T-cell (primary cell): ENCODE measurements at regions of chr11 and their contacts with region 1.

Region 1: DNA sequence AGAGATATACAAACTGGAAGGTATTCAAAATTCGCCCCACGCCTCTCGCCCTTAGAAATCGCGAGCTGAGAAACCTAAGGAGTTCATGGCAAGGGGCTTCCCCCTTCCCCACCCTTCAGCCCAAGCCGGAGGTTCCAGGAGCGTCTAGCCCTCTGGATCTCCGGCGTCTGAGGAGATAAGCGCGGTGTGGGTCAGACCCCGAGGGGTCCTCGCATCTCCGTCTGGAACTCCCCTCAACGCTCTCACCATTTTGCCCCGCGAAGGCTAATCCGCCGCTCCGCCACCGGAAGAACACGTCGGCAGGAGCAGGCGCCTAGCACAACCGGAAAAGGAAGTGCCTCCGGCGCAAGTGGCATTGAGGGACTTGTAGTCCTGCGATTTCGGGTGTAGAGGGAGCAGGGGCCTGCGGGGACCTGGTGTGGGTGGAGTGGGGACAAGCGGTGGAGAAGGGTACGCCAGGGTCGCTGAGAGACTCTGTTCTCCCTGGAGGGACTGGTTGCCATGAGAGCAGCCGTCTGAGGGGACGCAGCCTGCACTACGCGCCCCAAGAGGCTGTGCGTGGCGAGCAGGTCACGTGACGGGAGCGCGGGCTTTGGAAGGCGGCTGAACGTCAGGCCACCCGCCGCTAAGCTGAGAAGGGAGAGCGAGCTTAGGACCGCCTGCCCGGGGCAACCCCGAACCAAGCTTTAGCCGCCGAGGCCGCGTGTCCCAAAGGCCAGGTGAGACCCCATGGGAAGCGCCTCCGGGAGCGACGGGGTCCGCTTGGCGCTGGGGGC is at the starts of genes FEN1 and TMEM258:
- DNase-seq: peak; percentile 79 to 91 (median 83)
- ATAC-seq: peak; percentile 90 to 94 (median 93)
- H3K4me3 ChIP-seq: peak within 1 kb of the TSS; percentile 73 to 76
- H3K4me3 Mint-ChIP-seq: peak within 1 kb of the TSS; percentile 83 to 98 (median 89)
- H3K27ac ChIP-seq: peak within 1 kb of the TSS; percentile 94
- H3K27ac Mint-ChIP-seq: peak within 1 kb of the TSS; percentile 95 to 98
- H3K4me1 ChIP-seq: peaks cover 8 to 25% of the 10 kb centered on the region in 2 experiments
- H3K4me1 Mint-ChIP-seq: peaks cover 27 to 43% (median 40%) of the 10 kb centered on the region in 3 donors
- H3K27me3 ChIP-seq: no peaks in the 10 kb centered on the region
- H3K27me3 Mint-ChIP-seq: no peaks in the 10 kb centered on the region
- total RNA-seq, gene FEN1: 8.5 to 12.6 (median 10.9) TPM
- total RNA-seq, gene TMEM258: 68.1 to 96.0 (median 87.8) TPM

Region 2: DNA sequence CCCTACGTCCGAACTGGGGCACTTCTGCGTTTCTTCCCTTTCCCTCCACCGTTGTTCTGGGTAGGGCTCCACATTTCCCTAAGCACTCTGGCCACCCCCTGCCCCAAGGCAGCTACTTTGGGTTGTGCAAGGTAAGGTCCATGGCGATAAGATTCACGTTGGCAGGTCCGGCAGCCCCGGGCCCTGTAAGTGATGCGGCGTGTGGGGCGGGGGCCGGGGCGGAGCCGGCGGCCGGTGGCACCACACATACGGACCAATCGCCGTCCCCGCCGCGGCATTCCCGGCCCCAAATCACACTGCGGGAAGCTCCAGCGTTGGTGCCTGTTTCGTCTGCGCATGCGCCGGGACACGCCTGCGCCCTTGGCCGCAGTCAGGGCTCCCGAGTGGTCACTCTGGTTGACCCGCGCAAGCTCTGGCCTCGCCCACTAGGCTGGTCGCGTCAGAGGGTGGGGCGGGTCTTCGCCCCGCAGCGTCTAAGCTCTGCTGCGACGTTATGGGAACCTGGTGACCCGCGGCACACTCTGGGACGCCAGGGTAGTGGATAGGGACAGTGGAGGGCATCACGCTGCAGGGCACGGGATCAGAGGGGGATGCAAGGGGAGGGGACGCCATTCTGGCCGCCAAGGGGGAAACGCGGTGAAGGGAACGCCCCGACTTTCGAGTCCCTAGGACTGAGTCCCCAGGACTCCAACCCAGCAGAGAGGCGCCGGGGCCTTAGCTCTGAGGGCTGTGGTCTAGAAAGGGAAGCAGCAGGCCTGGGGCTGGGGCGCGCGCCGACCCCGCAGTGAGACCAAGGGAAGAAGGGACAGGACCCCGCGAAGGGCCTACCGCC is 22.7 kb after region 1 on chr11:
- CTCF ChIA-PET with region 1: interaction called in 1 of 2 experiments, 12 read pairs
- POLR2A ChIA-PET with region 1: interaction called in 1 of 2 experiments, 5 read pairs
- DNase-seq: peak in 16 of 35 experiments; percentile 10 to 57 (median 26)
- ATAC-seq: peak; percentile 12 to 42 (median 18)
- H3K4me3 ChIP-seq: peak overlapping the region; percentile 67 to 79
- H3K4me3 Mint-ChIP-seq: peak overlapping the region; percentile 85 to 91 (median 85)
- H3K27ac ChIP-seq: no peak overlapping the region
- H3K27ac Mint-ChIP-seq: peak overlapping the region; percentile 1 to 43
- H3K4me1 ChIP-seq: peaks cover 12 to 26% of the 10 kb centered on the region in 2 experiments
- H3K4me1 Mint-ChIP-seq: peaks cover 13 to 19% (median 16%) of the 10 kb centered on the region in 3 donors
- H3K27me3 ChIP-seq: peaks cover 0 to 43% of the 10 kb centered on the region in 2 experiments
- H3K27me3 Mint-ChIP-seq: peaks cover 0 to 32% of the 10 kb centered on the region in 2 donors

Region 3: GRCh38 chr11:61899146-61899841 is 106.8 kb after region 1 on chr11:
- CTCF ChIA-PET with region 1: interaction called, 9 to 17 read pairs
- POLR2A ChIA-PET with region 1: no interaction called
- DNase-seq: peak; percentile 82 to 97 (median 91)
- ATAC-seq: peak; percentile 89 to 92 (median 92)
- H3K4me3 ChIP-seq: no peak overlapping the region
- H3K4me3 Mint-ChIP-seq: no peak overlapping the region
- H3K27ac ChIP-seq: no peak overlapping the region
- H3K27ac Mint-ChIP-seq: peak overlapping the region; percentile 44 to 63
- H3K4me1 ChIP-seq: peaks cover 0 to 12% of the 10 kb centered on the region in 2 experiments
- H3K4me1 Mint-ChIP-seq: peaks cover 6 to 12% (median 8%) of the 10 kb centered on the region in 3 donors
- H3K27me3 ChIP-seq: peaks cover 0 to 9% of the 10 kb centered on the region in 2 experiments
- H3K27me3 Mint-ChIP-seq: peaks cover 0 to 3% of the 10 kb centered on the region in 2 donors

Region 4: GRCh38 chr11:61947486-61948210 is 155.2 kb after region 1 on chr11:
- CTCF ChIA-PET with region 1: interaction called, 8 to 21 read pairs
- POLR2A ChIA-PET with region 1: interaction called in 1 of 2 experiments, 6 read pairs
- DNase-seq: peak in 32 of 35 experiments; percentile 25 to 78 (median 58)
- ATAC-seq: peak; percentile 45 to 76 (median 67)
- H3K4me3 ChIP-seq: no peak overlapping the region
- H3K4me3 Mint-ChIP-seq: no peak overlapping the region
- H3K27ac ChIP-seq: no peak overlapping the region
- H3K27ac Mint-ChIP-seq: no peak overlapping the region
- H3K4me1 ChIP-seq: peaks cover 0 to 6% of the 10 kb centered on the region in 2 experiments
- H3K4me1 Mint-ChIP-seq: no peaks in the 10 kb centered on the region
- H3K27me3 ChIP-seq: peaks cover 0 to 41% of the 10 kb centered on the region in 2 experiments
- H3K27me3 Mint-ChIP-seq: peaks cover 0 to 4% of the 10 kb centered on the region in 2 donors